Heart right ventricle (tissue), 16 donors: ENCODE measurements at regions of chr9 and their contacts with region 1.

Region 1: DNA sequence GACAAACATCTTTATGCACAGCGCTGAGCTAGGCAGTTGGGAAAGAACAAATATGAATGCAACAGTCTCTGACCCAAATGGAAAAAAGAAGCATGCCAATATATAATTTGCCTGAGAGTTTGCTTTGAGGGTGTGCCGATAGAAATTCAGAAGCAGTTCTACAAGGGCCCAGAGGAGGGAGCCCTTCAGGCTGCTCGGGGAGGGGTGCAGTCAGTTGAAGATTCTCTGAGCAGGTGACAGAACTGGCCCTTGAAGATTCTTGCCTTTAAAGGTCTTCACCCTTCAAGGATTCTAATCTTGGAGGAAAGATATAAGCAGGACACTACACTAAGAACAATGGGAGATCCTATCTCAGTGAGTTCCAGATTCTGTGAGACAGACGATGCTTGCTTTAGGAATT is 3.7 kb upstream of the PAPPA start:
- DNase-seq: no peak
- ATAC-seq: peak in 2 of 8 donors; percentile 24 to 47
- H3K4me3 ChIP-seq: no peak overlapping the region
- H3K27ac ChIP-seq: no peak overlapping the region
- H3K4me1 ChIP-seq: peaks cover 0 to 13% (median 0%) of the 10 kb centered on the region in 9 donors
- H3K27me3 ChIP-seq: peaks cover 0 to 37% (median 6%) of the 10 kb centered on the region in 7 donors
- CTCF ChIP-seq: peak; percentile 36 to 72 (median 60)

Region 2: GRCh38 chr9:115883457-115884329 is 266.2 kb before region 1 on chr9:
- intact Hi-C with region 1: loop called in 1 of 10 experiments (anchors 10 kb)
- DNase-seq: peak in 1 of 2 donors; percentile 13
- ATAC-seq: peak in 6 of 8 donors; percentile 43 to 81 (median 64)
- H3K4me3 ChIP-seq: no peak overlapping the region
- H3K27ac ChIP-seq: no peak overlapping the region
- H3K4me1 ChIP-seq: no peaks in the 10 kb centered on the region
- H3K27me3 ChIP-seq: no peaks in the 10 kb centered on the region
- CTCF ChIP-seq: peak; percentile 11 to 66 (median 57)

Region 3: GRCh38 chr9:116494815-116495634 is 345.2 kb after region 1 on chr9:
- intact Hi-C with region 1: loop called in 6 of 10 experiments (anchors 5 to 10 kb)
- DNase-seq: peak in 1 of 2 donors; percentile 9
- ATAC-seq: peak in 1 of 8 donors; percentile 37
- H3K4me3 ChIP-seq: no peak overlapping the region
- H3K27ac ChIP-seq: no peak overlapping the region
- H3K4me1 ChIP-seq: peaks cover 0 to 9% (median 0%) of the 10 kb centered on the region in 9 donors
- H3K27me3 ChIP-seq: no peaks in the 10 kb centered on the region
- CTCF ChIP-seq: peak; percentile 35 to 76 (median 66)

Region 4: DNA sequence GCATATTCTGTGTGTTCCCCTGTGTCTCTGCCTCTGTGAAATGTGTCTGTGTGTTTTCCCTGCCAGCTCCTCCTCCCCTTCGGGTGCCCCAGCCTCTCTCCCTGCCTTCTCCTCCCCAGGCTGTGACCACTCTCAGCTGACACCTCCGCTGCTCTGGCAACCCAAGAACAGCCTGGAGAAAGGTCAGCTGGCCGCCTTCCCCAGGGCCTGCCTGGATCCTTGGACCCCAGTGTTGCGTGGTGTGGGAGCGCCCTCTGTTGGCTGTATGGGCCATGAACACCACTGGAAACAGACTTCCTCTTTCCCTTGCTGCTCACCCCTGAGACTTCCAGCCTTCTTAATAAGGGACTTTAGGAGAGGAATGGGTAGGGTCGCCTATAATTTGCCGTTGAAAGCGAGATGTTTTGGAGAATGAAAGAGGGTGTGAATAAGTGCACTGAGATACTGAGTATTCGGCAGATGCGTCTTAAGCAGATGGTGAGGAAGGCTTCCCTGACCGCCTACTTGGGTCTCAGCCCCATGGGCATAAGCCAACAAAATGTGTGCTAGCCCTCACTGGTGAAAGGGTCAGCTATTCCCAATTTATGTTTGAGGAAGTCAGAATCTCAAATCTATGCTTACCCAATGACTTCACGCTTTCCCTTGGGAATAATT is 422.4 kb after region 1 on chr9:
- intact Hi-C with region 1: loop called in 8 of 10 experiments (anchors 1 to 10 kb)
- DNase-seq: peak; percentile 89 to 91
- ATAC-seq: peak; percentile 95 to 100 (median 97)
- H3K4me3 ChIP-seq: no peak overlapping the region
- H3K27ac ChIP-seq: peak overlapping the region in 4 of 10 donors; percentile 2 to 39 (median 12)
- H3K4me1 ChIP-seq: peaks cover 0 to 48% (median 38%) of the 10 kb centered on the region in 9 donors
- H3K27me3 ChIP-seq: no peaks in the 10 kb centered on the region
- CTCF ChIP-seq: peak; percentile 72 to 96 (median 84)

Region 5: GRCh38 chr9:116661037-116661954 is 511.5 kb after region 1 on chr9:
- intact Hi-C with region 1: loop called in 4 of 10 experiments (anchors 5 to 10 kb)
- DNase-seq: no peak
- ATAC-seq: peak; percentile 68 to 89 (median 80)
- H3K4me3 ChIP-seq: no peak overlapping the region
- H3K27ac ChIP-seq: no peak overlapping the region
- H3K4me1 ChIP-seq: peaks cover 0 to 17% (median 8%) of the 10 kb centered on the region in 9 donors
- H3K27me3 ChIP-seq: no peaks in the 10 kb centered on the region
- CTCF ChIP-seq: peak; percentile 42 to 78 (median 73)